K562 (cell line): ENCODE measurements at regions of chr17 and their contacts with region 1.

Region 1: GRCh38 chr17:29931231-29931932 is 1.4 kb upstream of the SSH2 start:
- DNase-seq: peak; percentile 44 to 83 (median 54)
- ATAC-seq: peak; percentile 75
- H3K4me3 ChIP-seq: no peak overlapping the region; the same call in 1 of the 2 replicates
- H3K27ac ChIP-seq: no peak overlapping the region
- H3K4me1 ChIP-seq: peaks cover 4 to 7% of the 10 kb centered on the region in 2 experiments; a peak in 3 of 5 replicates
- H3K27me3 ChIP-seq: no peaks in the 10 kb centered on the region
- CTCF ChIP-seq: peak; percentile 83 to 90 (median 90)
- EP300 ChIP-seq: no peak
- POLR2A ChIP-seq: no peak
- RAD21 ChIP-seq: peak; percentile 71 to 91

Region 2: DNA sequence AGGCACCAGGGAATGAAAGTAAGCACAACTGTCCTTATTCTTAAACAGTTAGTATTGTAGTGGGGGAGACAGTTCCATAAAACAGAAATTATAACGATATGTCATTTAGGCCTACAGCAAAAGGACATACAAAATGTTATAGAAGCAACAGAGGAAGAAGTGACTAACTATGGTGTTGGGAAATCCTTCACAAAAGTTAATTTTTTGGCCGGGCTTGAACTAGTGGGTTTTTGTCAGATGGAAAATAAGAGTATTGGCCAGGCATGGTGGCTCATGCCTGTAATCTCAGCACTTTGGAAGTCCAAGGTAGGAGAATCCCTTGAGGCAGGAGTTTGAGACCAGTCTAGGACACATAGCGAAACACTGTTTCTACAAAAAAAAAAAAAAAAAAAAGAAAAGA is 129.1 kb before region 1 on chr17:
- CTCF ChIA-PET with region 1: interaction called, 62 read pairs
- POLR2A ChIA-PET with region 1: interaction called, 4 read pairs
- in situ Hi-C with region 1: loop called (anchors 5 kb)
- intact Hi-C with region 1: no loop called
- DNase-seq: no peak
- ATAC-seq: no peak
- H3K4me3 ChIP-seq: no peak overlapping the region
- H3K27ac ChIP-seq: no peak overlapping the region
- H3K4me1 ChIP-seq: peaks cover 3% of the 10 kb centered on the region in 2 experiments; a peak in 1 of 5 replicates
- H3K27me3 ChIP-seq: no peaks in the 10 kb centered on the region
- CTCF ChIP-seq: no peak
- EP300 ChIP-seq: no peak
- POLR2A ChIP-seq: no peak
- RAD21 ChIP-seq: no peak

Region 3: GRCh38 chr17:29867643-29868181 is 63.7 kb before region 1 on chr17:
- CTCF ChIA-PET with region 1: interaction called, 4 read pairs
- POLR2A ChIA-PET with region 1: no interaction called
- in situ Hi-C with region 1: no loop called
- intact Hi-C with region 1: loop called (anchors 5 kb)
- DNase-seq: no peak
- ATAC-seq: no peak
- H3K4me3 ChIP-seq: no peak overlapping the region
- H3K27ac ChIP-seq: no peak overlapping the region
- H3K4me1 ChIP-seq: no peaks in the 10 kb centered on the region; a peak in 1 of 5 replicates
- H3K27me3 ChIP-seq: no peaks in the 10 kb centered on the region
- CTCF ChIP-seq: peak in 1 of 3 experiments; percentile 30; a peak in 1 of 6 replicates
- EP300 ChIP-seq: no peak
- POLR2A ChIP-seq: no peak
- RAD21 ChIP-seq: peak in 1 of 2 experiments; percentile 41; a peak in 2 of 4 replicates

Region 4: GRCh38 chr17:30021708-30022317 is 90.4 kb after region 1 on chr17:
- CTCF ChIA-PET with region 1: interaction called, 3 read pairs
- POLR2A ChIA-PET with region 1: no interaction called
- in situ Hi-C with region 1: no loop called
- intact Hi-C with region 1: loop called (anchors 5 kb)
- DNase-seq: peak; percentile 39 to 57 (median 45)
- ATAC-seq: peak; percentile 68; the same call in 1 of the 3 replicates
- H3K4me3 ChIP-seq: no peak overlapping the region
- H3K27ac ChIP-seq: no peak overlapping the region
- H3K4me1 ChIP-seq: no peaks in the 10 kb centered on the region
- H3K27me3 ChIP-seq: no peaks in the 10 kb centered on the region; a peak in 1 of 5 replicates
- CTCF ChIP-seq: peak; percentile 65 to 81 (median 72); a peak in 5 of 6 replicates
- EP300 ChIP-seq: no peak
- POLR2A ChIP-seq: no peak
- RAD21 ChIP-seq: peak; percentile 55 to 87